ENCODE measurements at regions of chr2 and their contacts with region 1.

Region 1: DNA sequence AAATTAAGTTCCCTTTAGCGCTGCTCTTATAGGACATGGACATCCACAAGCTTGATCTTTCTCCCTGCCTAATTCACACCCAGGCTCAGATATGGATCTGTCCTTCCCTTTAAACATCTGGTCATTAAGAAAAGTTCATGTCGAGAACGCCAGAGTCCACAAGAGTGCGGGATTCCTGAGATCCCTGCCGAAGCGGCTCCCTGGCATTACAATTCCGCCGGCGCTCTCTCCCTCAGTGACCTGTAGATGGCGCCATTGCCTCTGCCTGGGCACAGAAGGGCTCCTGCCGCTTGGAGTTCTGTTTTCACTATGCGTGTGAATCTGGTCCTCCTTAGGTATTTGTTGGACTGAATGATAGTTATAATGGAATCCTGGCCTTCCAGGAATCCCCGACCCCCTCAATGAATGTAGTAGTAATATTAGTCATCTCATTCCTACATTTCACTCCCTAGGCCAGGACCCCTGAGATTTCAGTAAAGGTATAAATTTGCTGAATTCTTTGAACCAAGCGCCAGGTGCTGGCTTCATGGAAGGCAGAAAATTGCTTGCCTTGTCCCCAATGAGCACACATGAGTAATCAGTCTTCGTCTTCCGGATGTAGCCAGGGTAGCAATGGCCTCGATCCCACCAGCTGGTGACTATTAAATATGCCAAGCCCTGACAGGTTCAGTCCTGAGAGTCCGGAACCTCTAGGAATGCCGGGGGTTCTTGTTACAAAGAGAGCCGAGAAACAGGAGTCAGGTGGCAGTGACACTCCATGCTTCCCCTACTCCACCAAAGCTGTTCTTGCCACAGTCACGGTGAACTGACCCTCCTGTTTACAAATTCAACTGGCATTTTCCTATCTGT is 26.4 kb upstream of the CD207 start:
- DNase-seq: peak; percentile 86
- ATAC-seq: peak; percentile 89
- H3K4me3 Mint-ChIP-seq: no peak overlapping the region
- H3K27ac Mint-ChIP-seq: no peak overlapping the region
- H3K4me1 Mint-ChIP-seq: peaks cover 2% of the 10 kb centered on the region
- H3K27me3 Mint-ChIP-seq: peaks cover 33% of the 10 kb centered on the region

Region 2: GRCh38 chr2:70789304-70790135 is 72.5 kb before region 1 on chr2:
- CTCF ChIA-PET with region 1: interaction called, 11 read pairs
- POLR2A ChIA-PET with region 1: no interaction called
- intact Hi-C with region 1: loop called (anchors 1 to 2 kb)
- DNase-seq: peak; percentile 88
- ATAC-seq: peak; percentile 84
- H3K4me3 Mint-ChIP-seq: peak overlapping the region; percentile 56
- H3K27ac Mint-ChIP-seq: peak overlapping the region; percentile 27
- H3K4me1 Mint-ChIP-seq: peaks cover 11% of the 10 kb centered on the region
- H3K27me3 Mint-ChIP-seq: peaks cover 50% of the 10 kb centered on the region

Measured in activated CD4-positive, alpha-beta T cell treated with anti-CD3 and anti-CD28 coated beads for 36 hours (primary cell).